ENCODE measurements at regions of chr17 and their contacts with region 1.

Region 1: DNA sequence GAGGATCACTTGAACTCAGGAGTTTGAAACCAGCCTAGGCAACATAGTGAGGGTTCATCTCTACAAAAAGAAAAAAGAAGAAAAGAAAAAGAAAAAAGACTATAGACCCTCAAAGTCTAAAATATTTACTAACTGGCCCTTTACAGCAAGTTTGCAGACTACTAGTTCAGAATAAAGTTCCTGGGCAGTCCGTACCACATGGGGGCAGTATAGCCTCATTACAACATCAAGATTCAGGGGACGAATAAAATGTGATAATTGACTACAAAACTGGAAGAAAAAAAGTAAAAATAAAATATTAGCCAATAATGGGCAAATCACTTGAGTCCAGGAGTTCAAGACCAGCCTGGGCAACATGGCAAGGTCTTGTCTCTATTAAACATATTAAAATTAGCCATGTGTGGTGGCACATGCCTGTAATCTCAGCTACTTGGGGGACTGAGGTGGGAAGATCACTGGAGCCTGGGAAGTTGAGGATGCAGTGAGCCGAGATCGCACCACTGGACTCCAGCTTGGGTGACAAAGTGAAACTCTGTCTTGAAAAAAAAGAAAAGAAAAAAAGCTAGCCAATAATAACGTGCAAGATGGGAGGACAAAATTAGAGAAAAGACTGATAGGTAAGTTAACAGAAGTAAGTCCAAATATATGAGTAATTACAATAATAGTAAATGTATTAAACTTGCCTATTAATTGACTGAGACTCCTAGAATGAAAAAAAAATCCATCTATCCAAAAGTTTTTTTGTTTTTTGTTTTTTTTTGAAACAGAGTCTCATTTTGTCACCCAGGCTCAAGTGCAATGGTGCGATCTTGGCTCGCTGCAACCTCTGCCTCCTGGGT is 129.4 kb upstream of the SEC14L1 start:
- DNase-seq: peak; percentile 20 to 69 (median 56)
- ATAC-seq: no peak
- H3K4me3 ChIP-seq: no peak overlapping the region
- H3K4me3 Mint-ChIP-seq: no peak overlapping the region
- H3K27ac ChIP-seq: no peak overlapping the region
- H3K27ac Mint-ChIP-seq: no peak overlapping the region
- H3K4me1 ChIP-seq: no peaks in the 10 kb centered on the region
- H3K4me1 Mint-ChIP-seq: peaks cover 2% of the 10 kb centered on the region
- H3K27me3 ChIP-seq: no peaks in the 10 kb centered on the region
- H3K27me3 Mint-ChIP-seq: no peaks in the 10 kb centered on the region
- CTCF ChIP-seq: peak; percentile 81

Region 2: GRCh38 chr17:76826330-76827068 is 184.9 kb before region 1 on chr17:
- CTCF ChIA-PET with region 1: no interaction called
- POLR2A ChIA-PET with region 1: no interaction called
- intact Hi-C with region 1: no loop called
- DNase-seq: no peak
- ATAC-seq: no peak
- H3K4me3 ChIP-seq: no peak overlapping the region
- H3K4me3 Mint-ChIP-seq: no peak overlapping the region
- H3K27ac ChIP-seq: no peak overlapping the region
- H3K27ac Mint-ChIP-seq: no peak overlapping the region
- H3K4me1 ChIP-seq: no peaks in the 10 kb centered on the region
- H3K4me1 Mint-ChIP-seq: peaks cover 5% of the 10 kb centered on the region
- H3K27me3 ChIP-seq: no peaks in the 10 kb centered on the region
- H3K27me3 Mint-ChIP-seq: no peaks in the 10 kb centered on the region
- CTCF ChIP-seq: no peak

Region 3: DNA sequence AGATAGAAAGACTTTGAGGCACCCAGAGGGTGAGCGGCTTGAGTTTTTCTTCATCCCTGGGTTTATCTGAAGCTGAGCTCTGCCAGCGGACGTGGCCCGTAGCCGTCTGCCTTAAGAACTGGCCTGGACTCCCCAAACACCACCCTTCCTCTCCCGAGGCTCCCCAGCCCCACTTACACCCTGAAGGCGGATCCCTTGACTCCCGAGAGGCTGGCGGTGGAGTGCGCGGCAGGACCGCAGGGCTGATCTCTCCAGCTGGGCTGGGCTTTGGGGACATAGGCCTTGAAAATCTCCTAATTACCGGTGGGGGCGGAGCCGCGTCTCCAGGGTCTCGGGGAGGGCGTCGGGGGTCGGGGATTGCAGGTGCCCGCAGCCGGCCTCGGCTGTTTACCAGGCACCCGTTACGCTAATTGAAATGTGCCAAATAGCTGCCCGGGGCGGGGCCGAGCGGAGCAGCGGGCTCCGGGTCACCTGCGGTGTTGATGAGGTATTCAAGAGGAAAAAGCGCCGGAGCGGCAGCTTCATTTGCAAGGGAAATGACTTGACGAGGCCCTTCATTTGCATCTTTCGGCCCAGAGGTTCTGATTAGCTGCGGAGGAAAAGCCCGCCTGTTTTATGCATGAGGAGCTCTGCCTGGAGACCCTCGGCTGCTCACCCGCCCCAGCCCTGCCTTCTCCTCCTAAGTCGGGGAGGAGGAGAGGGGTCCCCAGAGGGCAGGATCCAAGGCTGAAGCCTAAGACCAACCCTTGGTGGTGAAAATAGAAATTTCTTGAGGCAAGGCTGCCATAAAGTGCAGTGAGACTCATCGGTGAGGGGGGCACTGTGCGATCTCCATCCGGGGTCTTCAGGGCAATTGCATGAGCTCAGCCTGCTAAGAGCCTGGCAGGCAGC is 42.4 kb before region 1 on chr17:
- CTCF ChIA-PET with region 1: interaction called, 4 read pairs
- POLR2A ChIA-PET with region 1: interaction called, 3 read pairs
- intact Hi-C with region 1: loop called (anchors 5 kb)
- DNase-seq: peak; percentile 18 to 78 (median 55)
- ATAC-seq: peak; percentile 84
- H3K4me3 ChIP-seq: peak overlapping the region; percentile 52 to 59
- H3K4me3 Mint-ChIP-seq: peak overlapping the region; percentile 85
- H3K27ac ChIP-seq: peak overlapping the region in 1 of 2 experiments; percentile 37
- H3K27ac Mint-ChIP-seq: peak overlapping the region; percentile 79
- H3K4me1 ChIP-seq: peaks cover 11% of the 10 kb centered on the region
- H3K4me1 Mint-ChIP-seq: peaks cover 20% of the 10 kb centered on the region
- H3K27me3 ChIP-seq: peaks cover 0 to 8% of the 10 kb centered on the region in 2 experiments
- H3K27me3 Mint-ChIP-seq: no peaks in the 10 kb centered on the region
- CTCF ChIP-seq: no peak

Region 4: GRCh38 chr17:77061669-77062068 is 50.3 kb after region 1 on chr17:
- CTCF ChIA-PET with region 1: interaction called, 16 read pairs
- POLR2A ChIA-PET with region 1: no interaction called
- intact Hi-C with region 1: loop called (anchors 1 kb)
- DNase-seq: no peak
- ATAC-seq: no peak
- H3K4me3 ChIP-seq: no peak overlapping the region
- H3K4me3 Mint-ChIP-seq: no peak overlapping the region
- H3K27ac ChIP-seq: no peak overlapping the region
- H3K27ac Mint-ChIP-seq: no peak overlapping the region
- H3K4me1 ChIP-seq: no peaks in the 10 kb centered on the region
- H3K4me1 Mint-ChIP-seq: peaks cover under 1% of the 10 kb centered on the region
- H3K27me3 ChIP-seq: peaks cover 0 to 5% of the 10 kb centered on the region in 2 experiments
- H3K27me3 Mint-ChIP-seq: peaks cover 12% of the 10 kb centered on the region
- CTCF ChIP-seq: no peak

Region 5: GRCh38 chr17:77217566-77217965 is 206.2 kb after region 1 on chr17:
- CTCF ChIA-PET with region 1: no interaction called
- POLR2A ChIA-PET with region 1: no interaction called
- intact Hi-C with region 1: no loop called
- DNase-seq: no peak
- ATAC-seq: no peak
- H3K4me3 ChIP-seq: no peak overlapping the region
- H3K4me3 Mint-ChIP-seq: no peak overlapping the region
- H3K27ac ChIP-seq: no peak overlapping the region
- H3K27ac Mint-ChIP-seq: no peak overlapping the region
- H3K4me1 ChIP-seq: no peaks in the 10 kb centered on the region
- H3K4me1 Mint-ChIP-seq: no peaks in the 10 kb centered on the region
- H3K27me3 ChIP-seq: no peaks in the 10 kb centered on the region
- H3K27me3 Mint-ChIP-seq: no peaks in the 10 kb centered on the region
- CTCF ChIP-seq: no peak

Region 6: DNA sequence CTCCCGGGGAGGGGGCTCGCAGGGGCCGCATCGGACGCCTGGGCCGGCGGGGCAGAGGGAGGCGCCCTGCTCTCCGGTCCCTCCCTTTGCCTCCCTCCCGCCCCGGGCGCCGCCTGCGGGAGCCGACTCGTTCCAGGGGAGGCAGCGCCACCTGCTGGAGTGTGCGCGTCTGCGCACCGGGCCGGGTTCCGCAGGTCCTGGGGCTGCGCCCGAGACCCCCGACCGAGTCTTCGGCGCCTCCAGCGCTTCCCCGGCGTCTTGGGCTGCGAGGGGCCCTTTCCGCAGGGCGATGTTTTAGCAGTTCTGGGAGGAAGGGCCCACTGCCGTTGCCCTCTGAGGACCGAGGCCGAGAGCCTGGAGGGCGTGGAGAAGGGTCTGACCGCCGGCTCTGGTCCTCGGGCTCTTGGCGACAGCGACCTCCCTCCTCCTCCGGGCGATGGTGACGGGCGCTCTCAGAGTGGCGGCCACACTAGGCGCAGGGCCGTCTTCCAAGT is 235.7 kb after region 1 on chr17:
- CTCF ChIA-PET with region 1: no interaction called
- POLR2A ChIA-PET with region 1: no interaction called
- intact Hi-C with region 1: loop called (anchors 1 kb)
- DNase-seq: peak; percentile 77 to 93 (median 85)
- ATAC-seq: peak; percentile 99
- H3K4me3 ChIP-seq: peak overlapping the region; percentile 37 to 55
- H3K4me3 Mint-ChIP-seq: peak overlapping the region; percentile 69
- H3K27ac ChIP-seq: no peak overlapping the region
- H3K27ac Mint-ChIP-seq: peak overlapping the region; percentile 27
- H3K4me1 ChIP-seq: peaks cover 11% of the 10 kb centered on the region
- H3K4me1 Mint-ChIP-seq: peaks cover 9% of the 10 kb centered on the region
- H3K27me3 ChIP-seq: no peaks in the 10 kb centered on the region
- H3K27me3 Mint-ChIP-seq: peaks cover 26% of the 10 kb centered on the region
- CTCF ChIP-seq: peak; percentile 97

Region 7: DNA sequence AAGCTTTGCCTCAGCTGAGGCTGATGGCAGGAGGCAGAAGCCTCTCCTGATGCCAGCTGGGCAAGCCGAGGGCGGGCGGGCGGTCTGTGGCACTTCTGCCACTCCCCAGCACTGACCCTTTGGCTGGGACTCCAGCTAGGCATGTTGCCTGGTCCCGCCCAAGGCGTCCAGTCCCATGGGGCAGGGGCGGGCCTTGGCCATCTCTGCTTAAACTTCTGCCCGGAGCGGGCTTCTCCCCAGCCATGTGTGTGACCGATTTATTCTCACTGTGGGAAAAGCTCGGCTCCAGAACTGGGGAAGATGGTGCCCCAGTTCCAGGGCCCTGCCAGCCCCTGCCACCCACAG is 478.5 kb after region 1 on chr17:
- CTCF ChIA-PET with region 1: no interaction called
- POLR2A ChIA-PET with region 1: no interaction called
- intact Hi-C with region 1: no loop called
- DNase-seq: peak in 1 of 9 experiments; percentile 18
- ATAC-seq: no peak
- H3K4me3 ChIP-seq: no peak overlapping the region
- H3K4me3 Mint-ChIP-seq: no peak overlapping the region
- H3K27ac ChIP-seq: peak overlapping the region in 1 of 2 experiments; percentile 25
- H3K27ac Mint-ChIP-seq: no peak overlapping the region
- H3K4me1 ChIP-seq: peaks cover 43% of the 10 kb centered on the region
- H3K4me1 Mint-ChIP-seq: peaks cover 35% of the 10 kb centered on the region
- H3K27me3 ChIP-seq: no peaks in the 10 kb centered on the region
- H3K27me3 Mint-ChIP-seq: no peaks in the 10 kb centered on the region
- CTCF ChIP-seq: no peak